ENCODE measurements at regions of chr4 and their contacts with region 1.

Region 1: GRCh38 chr4:89324671-89325070 is 17.1 kb upstream of the GPRIN3 start:
- DNase-seq: no peak
- ATAC-seq: peak; percentile 98
- H3K4me3 Mint-ChIP-seq: peak overlapping the region; percentile 12
- H3K27ac Mint-ChIP-seq: peak overlapping the region; percentile 66
- H3K4me1 Mint-ChIP-seq: peaks cover 27% of the 10 kb centered on the region
- H3K27me3 Mint-ChIP-seq: no peaks in the 10 kb centered on the region
- CTCF ChIP-seq: no peak

Region 2: GRCh38 chr4:88062843-88063242 is 1261.8 kb before region 1 on chr4:
- CTCF ChIA-PET with region 1: no interaction called
- POLR2A ChIA-PET with region 1: no interaction called
- intact Hi-C with region 1: no loop called
- DNase-seq: no peak
- ATAC-seq: no peak
- H3K4me3 Mint-ChIP-seq: no peak overlapping the region
- H3K27ac Mint-ChIP-seq: no peak overlapping the region
- H3K4me1 Mint-ChIP-seq: no peaks in the 10 kb centered on the region
- H3K27me3 Mint-ChIP-seq: no peaks in the 10 kb centered on the region
- CTCF ChIP-seq: no peak

Region 3: DNA sequence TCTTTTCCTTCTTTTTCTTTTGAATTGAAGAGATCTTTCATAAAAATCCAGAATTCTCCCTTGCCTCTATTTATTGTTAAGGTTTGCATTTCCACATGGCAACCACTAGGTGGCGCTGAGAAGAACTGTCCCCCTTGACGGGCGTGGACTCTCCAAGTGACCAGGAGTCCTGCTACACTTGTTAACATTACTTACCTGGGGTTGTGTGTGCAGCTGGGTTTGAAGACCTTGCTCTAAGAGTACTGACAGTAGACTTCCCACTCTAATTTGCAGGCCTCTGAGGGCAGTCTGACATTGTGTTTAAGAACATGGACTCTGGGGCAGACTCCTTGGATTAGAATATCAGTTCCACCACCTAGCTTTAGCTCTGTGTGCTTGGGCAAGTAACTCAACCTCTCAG is 69.8 kb before region 1 on chr4:
- CTCF ChIA-PET with region 1: no interaction called
- POLR2A ChIA-PET with region 1: no interaction called
- intact Hi-C with region 1: loop called (anchors 5 kb)
- DNase-seq: no peak
- ATAC-seq: peak; percentile 64
- H3K4me3 Mint-ChIP-seq: no peak overlapping the region
- H3K27ac Mint-ChIP-seq: no peak overlapping the region
- H3K4me1 Mint-ChIP-seq: no peaks in the 10 kb centered on the region
- H3K27me3 Mint-ChIP-seq: no peaks in the 10 kb centered on the region
- CTCF ChIP-seq: peak; percentile 88

Region 4: GRCh38 chr4:89283226-89284009 is 41.3 kb before region 1 on chr4:
- CTCF ChIA-PET with region 1: no interaction called
- POLR2A ChIA-PET with region 1: interaction called, 5 read pairs
- intact Hi-C with region 1: loop called (anchors 5 kb)
- DNase-seq: no peak
- ATAC-seq: peak; percentile 70
- H3K4me3 Mint-ChIP-seq: peak overlapping the region; percentile 25
- H3K27ac Mint-ChIP-seq: peak overlapping the region; percentile 19
- H3K4me1 Mint-ChIP-seq: peaks cover 30% of the 10 kb centered on the region
- H3K27me3 Mint-ChIP-seq: peaks cover 2% of the 10 kb centered on the region
- CTCF ChIP-seq: no peak

Region 5: GRCh38 chr4:89307446-89308160 is 17.1 kb before region 1 on chr4 and contains the start of gene GPRIN3:
- CTCF ChIA-PET with region 1: no interaction called
- POLR2A ChIA-PET with region 1: interaction called, 12 read pairs
- intact Hi-C with region 1: loop called (anchors 1 kb)
- DNase-seq: peak; percentile 59
- ATAC-seq: peak; percentile 93
- H3K4me3 Mint-ChIP-seq: peak within 1 kb of the TSS; percentile 88
- H3K27ac Mint-ChIP-seq: peak within 1 kb of the TSS; percentile 46
- H3K4me1 Mint-ChIP-seq: peaks cover 30% of the 10 kb centered on the region
- H3K27me3 Mint-ChIP-seq: peaks cover 10% of the 10 kb centered on the region
- CTCF ChIP-seq: no peak
- total RNA-seq, gene GPRIN3: 1.8 and 1.9 TPM in 2 replicates

Measured in activated B cell treated with CpG ODN at 0.5 μM for 24 hours (primary cell).